Activated T-helper 1 cell treated with anti-CD3 and anti-CD28 coated beads, Interleukin-12 subunit alpha, Interleukin-12 subunit beta, Interleukin-2, Interleukin-4 antibody, amounts not matched to agents 30 ng/mL and 10 ng/mL and 1 ng/mL, durations not matched to agents 14 hours and 24 hours and 36 hours (primary cell): ENCODE measurements at regions of chr4 and their contacts with region 1.

Region 1: GRCh38 chr4:152779513-152780266 is at the starts of genes ARFIP1 and TIGD4:
- DNase-seq: peak; percentile 96
- H3K4me3 Mint-ChIP-seq: peak within 1 kb of the TSS; percentile 99
- H3K27ac Mint-ChIP-seq: peak within 1 kb of the TSS; percentile 94
- H3K4me1 Mint-ChIP-seq: peaks cover 44% of the 10 kb centered on the region
- H3K27me3 Mint-ChIP-seq: peaks cover 25% of the 10 kb centered on the region
- total RNA-seq, gene ARFIP1: 18.6 and 23.2 TPM in 2 replicates
- total RNA-seq, gene TIGD4: 0.24 and 0.57 TPM in 2 replicates

Region 2: DNA sequence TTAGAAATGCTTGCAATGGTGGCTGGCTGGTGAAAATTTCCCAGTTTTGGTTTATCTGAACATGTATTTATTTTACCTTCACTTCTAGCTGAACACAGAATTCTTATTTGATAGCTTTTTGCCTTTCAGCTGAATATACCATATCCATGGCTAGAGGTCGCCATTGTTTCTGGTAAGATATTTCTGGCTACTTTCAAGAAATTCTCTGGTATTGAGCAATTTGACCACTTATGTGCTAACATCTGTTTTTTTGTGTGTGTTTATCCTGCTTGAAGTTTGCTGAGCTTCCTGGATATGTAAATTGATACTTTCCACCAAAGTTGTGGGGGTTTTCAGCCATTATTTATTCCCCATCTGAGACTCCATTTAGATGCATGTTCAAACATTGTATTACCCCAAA is 319.2 kb before region 1 on chr4:
- intact Hi-C with region 1: loop called (anchors 2 kb)
- DNase-seq: no peak
- H3K4me3 Mint-ChIP-seq: no peak overlapping the region
- H3K27ac Mint-ChIP-seq: peak overlapping the region; percentile 59
- H3K4me1 Mint-ChIP-seq: peaks cover 79% of the 10 kb centered on the region
- H3K27me3 Mint-ChIP-seq: no peaks in the 10 kb centered on the region

Region 3: DNA sequence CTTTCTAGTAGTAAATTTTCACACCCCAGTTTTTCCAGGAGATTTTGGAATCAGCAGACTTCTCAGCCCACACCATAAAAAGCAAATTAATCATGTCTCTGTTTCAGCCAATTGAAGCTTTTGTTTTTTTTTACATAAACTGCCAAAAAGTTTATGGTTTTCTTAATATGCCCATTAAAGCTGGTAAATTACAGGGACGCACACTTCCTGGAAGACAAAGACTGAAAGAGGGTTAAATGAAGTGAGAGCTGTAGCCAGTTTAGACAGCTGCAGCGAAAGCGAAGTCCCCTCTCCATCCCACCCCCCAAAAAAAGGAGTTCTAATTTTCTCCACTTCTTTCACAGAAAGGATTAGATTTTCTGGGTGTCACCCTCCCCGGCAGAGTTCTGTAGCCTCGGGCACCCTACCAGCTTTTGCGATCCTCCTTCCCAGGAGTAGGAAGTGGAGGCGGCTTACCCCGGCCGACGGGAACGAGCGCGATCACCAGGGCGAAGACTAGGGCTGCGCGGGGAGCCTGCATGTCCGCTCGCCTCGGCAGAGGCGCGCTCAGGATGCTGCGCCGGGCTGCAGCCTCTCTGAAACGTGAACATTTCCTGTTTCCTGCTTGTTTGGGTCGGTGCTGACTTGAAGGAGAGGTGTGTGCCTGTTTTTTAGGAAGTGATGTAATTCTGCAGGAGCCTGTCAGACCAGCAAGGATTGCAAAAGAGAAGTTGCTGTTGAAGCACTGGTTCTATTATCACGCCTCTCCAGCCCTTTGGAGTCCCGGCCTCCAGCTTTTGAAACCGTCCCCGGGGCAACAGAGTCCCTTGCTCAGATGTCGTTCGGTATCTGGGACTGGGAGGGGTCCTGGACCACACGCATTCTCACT is 100.0 kb before region 1 on chr4 and contains the start of gene TMEM154:
- intact Hi-C with region 1: loop called (anchors 2 kb)
- DNase-seq: peak; percentile 77
- H3K4me3 Mint-ChIP-seq: peak within 1 kb of the TSS; percentile 91
- H3K27ac Mint-ChIP-seq: peak within 1 kb of the TSS; percentile 92
- H3K4me1 Mint-ChIP-seq: peaks cover 84% of the 10 kb centered on the region
- H3K27me3 Mint-ChIP-seq: no peaks in the 10 kb centered on the region
- total RNA-seq, gene TMEM154: 13.0 and 13.3 TPM in 2 replicates

Region 4: DNA sequence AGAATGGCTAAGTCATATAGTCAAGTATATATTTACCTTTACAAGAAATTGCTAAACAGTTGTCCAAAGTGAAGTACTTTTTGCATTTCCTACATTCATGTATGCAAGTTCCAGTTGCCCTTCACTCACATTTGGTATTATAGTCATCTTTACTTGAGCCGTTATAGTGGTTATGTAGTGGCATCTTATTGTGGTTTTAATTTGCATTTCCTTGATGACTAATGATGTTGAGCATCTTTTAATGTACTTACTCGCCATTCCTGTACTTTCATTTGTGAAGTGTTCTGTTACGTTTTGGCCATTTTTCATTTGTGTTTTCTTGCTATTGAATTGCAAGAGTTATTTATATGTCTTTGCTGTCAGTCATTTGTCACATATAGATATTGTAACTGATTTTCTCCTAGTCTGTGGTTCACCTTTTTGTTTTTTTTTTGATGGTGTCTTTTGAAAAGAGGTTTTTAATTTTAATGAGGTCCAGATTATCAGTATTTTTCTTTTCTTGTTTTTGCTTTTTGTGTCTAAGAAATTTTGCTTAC is 27.7 kb after region 1 on chr4:
- intact Hi-C with region 1: loop called (anchors 1 kb)
- DNase-seq: no peak
- H3K4me3 Mint-ChIP-seq: peak overlapping the region; percentile 32
- H3K27ac Mint-ChIP-seq: peak overlapping the region; percentile 54
- H3K4me1 Mint-ChIP-seq: peaks cover 20% of the 10 kb centered on the region
- H3K27me3 Mint-ChIP-seq: no peaks in the 10 kb centered on the region

Region 5: DNA sequence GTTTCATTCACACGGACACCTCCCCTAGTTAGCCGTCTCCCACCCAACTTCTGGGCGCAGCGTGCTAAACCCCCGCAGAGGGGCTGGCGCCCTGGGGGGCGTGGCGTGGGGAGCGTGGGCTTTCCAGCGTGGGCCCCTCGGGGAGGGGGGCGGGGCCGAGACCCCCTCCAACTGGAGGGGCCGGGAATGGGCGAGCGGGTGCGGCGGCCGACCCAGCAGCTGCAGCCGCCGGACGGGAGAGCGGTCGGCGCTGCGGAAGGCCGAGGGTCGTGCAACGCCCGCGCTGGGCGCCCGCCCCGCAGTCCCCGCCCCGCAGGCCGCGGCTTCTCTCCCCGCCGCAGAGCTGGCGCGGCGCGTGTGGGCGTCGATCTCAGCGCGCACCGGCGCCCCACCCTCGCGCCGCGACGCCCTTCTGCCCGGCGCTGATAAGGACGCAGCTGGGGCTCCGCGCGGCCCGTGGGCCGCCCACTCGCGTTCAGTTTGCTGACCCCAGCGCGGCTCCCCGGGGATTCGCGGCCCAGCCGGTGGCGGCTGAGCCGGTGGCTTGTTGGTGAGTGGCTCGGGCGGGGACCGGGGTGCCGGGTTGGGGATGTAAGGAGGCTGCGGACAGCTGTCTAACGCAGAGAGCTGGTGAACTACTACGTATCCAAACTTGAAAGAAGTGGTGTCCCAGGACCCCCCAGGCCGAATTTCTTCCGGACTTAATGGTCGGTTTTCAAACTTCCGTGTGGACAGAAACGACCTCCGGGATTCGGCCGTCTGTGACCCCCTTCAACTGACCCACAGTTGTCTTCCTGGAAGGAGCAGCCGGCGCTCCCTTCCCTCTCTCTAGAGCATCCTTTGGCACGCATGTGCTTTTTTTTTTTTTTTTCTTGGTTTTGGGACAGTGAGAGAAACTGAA is 157.9 kb after region 1 on chr4:
- intact Hi-C with region 1: loop called (anchors 2 kb)
- DNase-seq: no peak
- H3K4me3 Mint-ChIP-seq: peak overlapping the region; percentile 80
- H3K27ac Mint-ChIP-seq: no peak overlapping the region
- H3K4me1 Mint-ChIP-seq: peaks cover 24% of the 10 kb centered on the region
- H3K27me3 Mint-ChIP-seq: peaks cover 74% of the 10 kb centered on the region

Region 6: GRCh38 chr4:153249199-153250041 is 469.7 kb after region 1 on chr4:
- intact Hi-C with region 1: loop called (anchors 1 kb)
- DNase-seq: peak; percentile 79
- H3K4me3 Mint-ChIP-seq: peak overlapping the region; percentile 86
- H3K27ac Mint-ChIP-seq: peak overlapping the region; percentile 71
- H3K4me1 Mint-ChIP-seq: peaks cover 23% of the 10 kb centered on the region
- H3K27me3 Mint-ChIP-seq: peaks cover 11% of the 10 kb centered on the region